Colonic mucosa (tissue), 4 donors: ENCODE measurements at regions of chr15 and their contacts with region 1.

Region 1: DNA sequence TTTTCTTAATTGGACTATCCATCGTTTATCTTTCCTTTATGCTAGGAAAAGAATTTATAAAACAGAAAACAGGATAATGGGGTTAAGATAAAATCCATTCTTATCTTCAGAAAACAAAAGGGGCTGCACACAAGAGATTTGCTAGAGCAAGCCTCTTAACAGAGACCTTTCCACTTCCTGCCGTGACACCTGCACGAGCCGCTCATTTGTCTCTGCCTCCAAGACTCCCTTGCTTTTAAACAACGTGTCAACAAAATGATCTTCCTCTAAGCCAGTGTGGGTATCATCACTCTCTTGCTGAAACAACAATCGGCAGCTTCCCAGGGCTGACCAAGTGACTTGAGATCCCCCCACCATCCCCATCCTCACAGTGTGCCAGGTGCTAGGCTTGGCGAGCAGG is 33.1 kb downstream of the GABRB3 start:
- DNase-seq: no peak
- H3K4me3 ChIP-seq: no peak overlapping the region
- H3K27ac ChIP-seq: no peak overlapping the region
- H3K4me1 ChIP-seq: no peaks in the 10 kb centered on the region
- H3K27me3 ChIP-seq: no peaks in the 10 kb centered on the region
- CTCF ChIP-seq: no peak

Region 2: DNA sequence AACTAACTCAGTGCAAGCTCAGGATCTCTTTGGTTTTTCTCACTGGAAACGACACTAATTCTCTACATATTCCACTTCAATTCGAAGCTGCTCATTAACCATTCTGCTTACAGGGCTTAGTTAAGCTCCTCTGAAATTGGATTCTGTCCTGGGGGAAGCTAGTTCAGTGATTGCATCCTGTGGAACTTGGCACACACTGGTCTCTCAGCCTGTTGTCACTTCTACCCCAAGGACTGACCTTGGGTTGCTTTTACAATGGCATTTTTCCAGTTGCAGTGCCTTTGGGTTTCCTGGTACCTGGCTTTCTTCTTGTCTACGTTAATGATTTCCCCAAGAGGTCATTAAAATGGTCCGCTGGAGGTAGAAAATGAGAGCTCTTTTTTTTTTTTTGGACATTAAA is 66.4 kb after region 1 on chr15:
- intact Hi-C with region 1: loop called (anchors 10 kb)
- DNase-seq: no peak
- H3K4me3 ChIP-seq: no peak overlapping the region
- H3K27ac ChIP-seq: no peak overlapping the region
- H3K4me1 ChIP-seq: no peaks in the 10 kb centered on the region
- H3K27me3 ChIP-seq: no peaks in the 10 kb centered on the region
- CTCF ChIP-seq: no peak

Region 3: GRCh38 chr15:27648359-27648758 is 908.6 kb after region 1 on chr15:
- intact Hi-C with region 1: no loop called
- DNase-seq: no peak
- H3K4me3 ChIP-seq: no peak overlapping the region
- H3K27ac ChIP-seq: no peak overlapping the region
- H3K4me1 ChIP-seq: no peaks in the 10 kb centered on the region
- H3K27me3 ChIP-seq: no peaks in the 10 kb centered on the region
- CTCF ChIP-seq: no peak